ENCODE measurements at regions of chr11 and their contacts with region 1.

Region 1: GRCh38 chr11:128630367-128631230 is 43.2 kb upstream of the ETS1 start:
- DNase-seq: peak; percentile 93
- H3K4me3 Mint-ChIP-seq: peak overlapping the region; percentile 68
- H3K27ac Mint-ChIP-seq: peak overlapping the region; percentile 80
- H3K4me1 Mint-ChIP-seq: peaks cover 66% of the 10 kb centered on the region
- H3K27me3 Mint-ChIP-seq: peaks cover 3% of the 10 kb centered on the region

Region 2: DNA sequence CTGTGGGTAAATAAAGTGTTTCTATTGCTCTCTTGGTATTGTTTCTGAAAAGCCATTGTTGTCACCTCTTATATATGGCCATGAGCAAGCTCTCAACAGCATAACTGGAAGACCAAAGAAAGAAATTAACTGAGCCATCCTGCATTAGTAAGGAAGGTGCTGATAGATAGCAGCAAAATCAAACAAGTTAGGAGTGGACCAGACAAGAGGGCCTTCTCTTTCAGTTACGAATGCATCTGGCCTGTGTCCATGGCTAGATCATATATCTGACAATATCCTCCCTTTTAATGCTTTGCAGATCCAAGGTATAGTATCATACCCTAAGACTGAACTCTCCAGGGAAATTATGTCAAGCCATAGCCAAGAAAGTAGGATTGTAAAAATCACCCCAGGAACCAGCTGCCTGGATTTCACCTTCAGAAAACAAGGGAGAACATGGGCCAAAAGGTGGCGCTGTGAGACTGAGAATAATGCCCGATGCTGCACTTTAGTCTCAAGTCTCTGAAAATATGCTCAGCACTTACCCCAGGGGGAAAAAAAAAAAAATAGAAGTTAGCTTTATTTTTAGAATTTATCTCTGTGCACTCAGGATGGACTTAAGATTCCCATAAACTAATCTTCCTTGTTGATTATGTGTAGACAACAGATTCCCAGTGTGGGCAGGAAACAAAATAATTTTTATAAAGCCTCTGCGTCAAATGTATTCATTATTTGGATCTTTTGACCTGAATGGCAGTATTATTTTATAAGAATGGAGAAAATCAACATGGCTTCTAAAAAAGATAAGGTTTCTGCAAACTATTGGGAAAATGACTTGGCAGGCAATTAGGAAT is 458.3 kb before region 1 on chr11:
- CTCF ChIA-PET with region 1: interaction called, 149 read pairs
- DNase-seq: peak; percentile 92
- H3K4me3 Mint-ChIP-seq: no peak overlapping the region
- H3K27ac Mint-ChIP-seq: no peak overlapping the region
- H3K4me1 Mint-ChIP-seq: peaks cover 2% of the 10 kb centered on the region
- H3K27me3 Mint-ChIP-seq: peaks cover 7% of the 10 kb centered on the region

Region 3: DNA sequence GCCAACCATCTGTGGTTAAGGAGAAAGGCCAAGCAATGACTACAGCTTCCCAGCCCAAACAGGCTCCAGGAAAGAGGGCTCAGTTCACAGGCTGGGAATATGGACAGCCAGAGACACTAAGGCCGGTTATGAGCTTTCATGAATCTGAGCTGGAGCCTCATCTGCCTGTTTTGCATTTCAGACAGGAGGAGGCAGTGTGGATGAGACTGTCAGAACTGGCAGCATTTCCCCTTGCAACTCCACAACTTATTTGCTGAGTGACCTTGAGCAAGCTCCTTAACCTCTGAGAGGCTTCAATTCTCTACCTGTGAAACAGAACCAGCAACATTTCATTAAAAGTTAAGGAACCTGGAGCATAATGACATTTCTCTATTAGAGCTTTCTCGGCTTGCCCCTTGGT is 307.2 kb before region 1 on chr11:
- CTCF ChIA-PET with region 1: interaction called, 42 read pairs
- DNase-seq: peak; percentile 69
- H3K4me3 Mint-ChIP-seq: no peak overlapping the region
- H3K27ac Mint-ChIP-seq: peak overlapping the region; percentile 96
- H3K4me1 Mint-ChIP-seq: peaks cover 91% of the 10 kb centered on the region
- H3K27me3 Mint-ChIP-seq: no peaks in the 10 kb centered on the region

Region 4: GRCh38 chr11:128482512-128483191 is 147.9 kb before region 1 on chr11:
- CTCF ChIA-PET with region 1: interaction called, 10 read pairs
- DNase-seq: peak; percentile 60
- H3K4me3 Mint-ChIP-seq: peak overlapping the region; percentile 77
- H3K27ac Mint-ChIP-seq: peak overlapping the region; percentile 92
- H3K4me1 Mint-ChIP-seq: peaks cover 98% of the 10 kb centered on the region
- H3K27me3 Mint-ChIP-seq: no peaks in the 10 kb centered on the region

Region 5: DNA sequence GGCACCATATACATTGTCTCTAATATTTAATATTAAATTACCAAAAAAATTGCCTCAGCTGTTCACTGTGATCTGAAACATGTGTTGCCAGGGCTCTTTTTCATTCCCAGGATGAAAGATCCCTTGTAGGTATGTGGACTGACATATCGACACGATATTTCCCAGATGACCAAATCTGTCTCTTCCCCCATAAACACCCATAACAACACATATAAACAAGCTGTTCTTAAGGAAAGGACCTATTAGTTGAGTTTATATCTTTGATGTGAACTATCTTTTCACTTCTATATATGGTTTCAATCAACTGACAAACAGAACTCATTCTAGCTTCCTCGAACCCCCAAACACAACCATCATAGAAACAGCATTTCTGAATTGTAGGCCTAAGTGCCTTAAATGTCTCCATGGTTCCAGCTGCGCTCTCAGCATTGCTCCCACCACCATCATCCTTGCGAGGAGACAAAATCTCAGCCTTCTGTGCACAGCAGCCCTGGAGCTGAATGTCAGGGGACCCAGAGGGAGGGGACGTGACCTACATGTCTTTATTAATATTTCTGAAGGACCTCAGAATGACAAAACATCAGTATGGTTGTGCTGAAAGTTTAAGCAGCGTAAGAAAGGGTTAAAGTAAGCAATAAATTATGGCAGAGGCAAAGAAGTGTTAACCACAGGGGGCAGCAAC is 110.3 kb before region 1 on chr11:
- CTCF ChIA-PET with region 1: interaction called, 21 read pairs
- DNase-seq: peak; percentile 49
- H3K4me3 Mint-ChIP-seq: peak overlapping the region; percentile 96
- H3K27ac Mint-ChIP-seq: peak overlapping the region; percentile 100
- H3K4me1 Mint-ChIP-seq: peaks cover 41% of the 10 kb centered on the region
- H3K27me3 Mint-ChIP-seq: no peaks in the 10 kb centered on the region

Region 6: DNA sequence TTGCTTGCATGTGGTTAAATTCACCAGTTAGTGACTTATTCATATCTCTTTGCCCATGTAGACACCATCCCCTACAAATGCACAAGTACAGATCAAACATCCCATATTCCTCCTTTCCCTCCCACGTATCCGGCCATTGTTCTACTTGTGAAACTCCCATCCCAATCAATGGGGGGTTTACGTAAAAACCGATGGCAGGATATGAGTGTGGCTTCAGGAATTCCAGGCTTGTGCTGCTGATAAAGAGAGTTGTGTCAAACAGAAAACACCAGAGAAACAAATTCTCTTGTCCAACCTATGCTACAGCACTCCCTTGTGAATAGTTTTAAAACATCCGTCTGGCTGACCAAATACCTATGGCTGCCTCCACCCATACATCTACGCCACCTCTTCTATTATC is 78.8 kb after region 1 on chr11:
- CTCF ChIA-PET with region 1: no interaction called
- DNase-seq: no peak
- H3K4me3 Mint-ChIP-seq: no peak overlapping the region
- H3K27ac Mint-ChIP-seq: no peak overlapping the region
- H3K4me1 Mint-ChIP-seq: peaks cover 85% of the 10 kb centered on the region
- H3K27me3 Mint-ChIP-seq: no peaks in the 10 kb centered on the region

Region 7: DNA sequence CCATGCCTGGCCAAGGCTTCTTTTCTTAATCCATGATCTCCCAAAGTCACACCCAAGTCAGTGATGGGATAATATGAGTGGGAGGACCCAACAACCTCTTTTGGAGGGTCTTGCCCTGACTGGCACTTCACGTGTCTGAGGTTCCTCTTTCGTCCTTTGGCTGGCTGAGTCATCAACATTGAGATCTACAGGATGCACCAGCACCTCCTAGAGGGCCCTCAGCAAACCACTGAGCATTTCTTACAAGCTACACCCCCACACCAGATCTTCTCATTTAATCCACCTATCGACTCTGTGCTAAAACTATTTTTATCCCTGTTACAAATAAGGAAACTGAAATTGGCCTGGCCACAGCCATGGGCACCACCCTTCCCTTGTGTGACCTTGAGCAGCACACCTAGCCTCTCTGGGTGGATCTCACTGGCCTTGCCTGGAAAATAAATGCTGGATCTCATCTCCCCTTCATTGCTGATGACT is 126.7 kb after region 1 on chr11:
- CTCF ChIA-PET with region 1: interaction called, 73 read pairs
- DNase-seq: peak; percentile 79
- H3K4me3 Mint-ChIP-seq: no peak overlapping the region
- H3K27ac Mint-ChIP-seq: peak overlapping the region; percentile 80
- H3K4me1 Mint-ChIP-seq: peaks cover 77% of the 10 kb centered on the region
- H3K27me3 Mint-ChIP-seq: no peaks in the 10 kb centered on the region